ENCODE measurements at regions of chr5 and their contacts with region 1.

Region 1: DNA sequence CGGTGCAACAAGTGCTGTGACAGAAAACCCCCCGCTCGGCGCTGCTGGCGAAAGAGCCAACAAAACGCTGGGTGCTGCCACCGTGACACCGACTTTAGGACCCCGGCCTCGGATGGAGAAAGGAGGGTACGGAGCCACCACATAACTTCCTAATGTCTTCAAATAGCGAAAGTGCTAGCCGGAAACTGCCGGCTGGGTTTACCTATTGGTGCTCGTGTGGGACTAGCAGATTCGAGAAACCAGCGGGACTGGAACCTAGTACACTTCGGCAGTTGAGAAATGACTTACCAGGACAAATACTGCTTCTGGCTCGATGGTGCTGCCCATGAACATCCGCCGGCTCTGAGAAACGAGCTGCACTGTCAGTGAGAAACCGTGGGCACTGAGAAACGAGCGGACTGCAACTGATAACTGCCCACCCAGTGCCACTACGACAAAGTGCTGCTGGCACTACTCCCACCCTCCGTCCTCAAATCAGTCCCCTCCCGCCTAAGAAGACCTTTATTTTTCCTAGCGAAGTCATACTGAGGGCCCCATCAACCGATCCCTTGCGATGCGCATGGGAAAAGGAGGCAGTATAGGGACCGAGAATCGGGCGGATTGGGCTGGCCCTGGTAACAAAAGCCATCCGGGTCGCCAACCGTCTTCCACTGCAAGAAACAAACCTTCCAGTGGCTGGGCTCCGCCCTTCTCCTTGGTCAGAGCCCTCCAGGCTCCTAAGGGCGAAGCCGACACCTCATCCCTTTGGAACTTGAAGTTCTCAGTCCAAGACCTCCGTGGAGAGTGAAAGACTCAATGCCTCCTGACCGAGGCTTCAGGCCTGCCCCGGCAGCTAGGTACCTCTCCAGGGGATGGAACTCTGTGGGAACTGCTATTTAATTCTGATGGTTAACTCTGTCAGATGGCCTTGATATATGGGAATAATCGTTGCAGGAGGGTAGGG is 27.0 kb upstream of the ANXA2R start:
- DNase-seq: peak; percentile 78
- H3K4me3 Mint-ChIP-seq: peak overlapping the region; percentile 99
- H3K27ac Mint-ChIP-seq: peak overlapping the region; percentile 100
- H3K4me1 Mint-ChIP-seq: peaks cover 47% of the 10 kb centered on the region
- H3K27me3 Mint-ChIP-seq: peaks cover 3% of the 10 kb centered on the region

Region 2: GRCh38 chr5:42950440-42951292 is 116.4 kb before region 1 on chr5:
- intact Hi-C with region 1: loop called (anchors 1 kb)
- DNase-seq: peak; percentile 60
- H3K4me3 Mint-ChIP-seq: peak overlapping the region; percentile 88
- H3K27ac Mint-ChIP-seq: peak overlapping the region; percentile 97
- H3K4me1 Mint-ChIP-seq: peaks cover 37% of the 10 kb centered on the region
- H3K27me3 Mint-ChIP-seq: peaks cover 8% of the 10 kb centered on the region

Region 3: DNA sequence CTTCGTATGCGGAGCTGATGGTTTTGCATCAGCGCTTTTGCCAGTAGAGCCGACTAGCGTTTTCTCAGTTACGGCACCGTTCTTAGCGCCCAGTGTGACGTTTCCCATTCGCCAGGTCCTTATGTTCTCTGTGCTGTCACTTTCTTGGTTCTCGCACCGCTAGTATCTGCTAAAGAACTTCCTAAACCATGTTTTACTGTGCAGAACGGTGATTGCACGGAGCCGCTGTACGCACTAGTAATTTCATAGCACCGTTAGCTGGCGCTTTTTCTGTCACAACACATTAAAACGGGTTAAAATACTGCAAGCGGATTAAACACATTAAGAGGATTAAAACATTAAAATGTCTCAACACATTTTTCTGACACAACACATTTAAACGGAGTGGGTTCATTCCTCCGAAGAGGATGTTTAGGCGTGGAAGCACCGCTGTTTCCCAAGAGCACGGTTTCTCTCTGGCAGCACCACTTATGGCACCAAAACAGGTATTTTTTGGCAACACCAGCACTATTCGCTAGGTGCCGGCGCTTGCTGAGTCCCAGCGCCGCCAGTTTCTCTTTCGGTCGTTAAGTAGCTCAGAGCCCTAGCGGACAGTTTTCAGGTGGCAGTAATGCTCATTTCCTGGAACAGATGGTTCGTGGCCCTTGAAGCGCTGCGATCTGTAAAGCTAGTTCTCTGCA is 47.3 kb before region 1 on chr5:
- intact Hi-C with region 1: loop called (anchors 1 kb)
- DNase-seq: peak; percentile 83
- H3K4me3 Mint-ChIP-seq: peak overlapping the region; percentile 90
- H3K27ac Mint-ChIP-seq: peak overlapping the region; percentile 97
- H3K4me1 Mint-ChIP-seq: peaks cover 43% of the 10 kb centered on the region
- H3K27me3 Mint-ChIP-seq: no peaks in the 10 kb centered on the region

Region 4: GRCh38 chr5:43120720-43121564 is 53.9 kb after region 1 on chr5 and contains the start of gene ZNF131:
- intact Hi-C with region 1: loop called (anchors 1 kb)
- DNase-seq: peak; percentile 96
- H3K4me3 Mint-ChIP-seq: peak within 1 kb of the TSS; percentile 95
- H3K27ac Mint-ChIP-seq: peak within 1 kb of the TSS; percentile 98
- H3K4me1 Mint-ChIP-seq: peaks cover 42% of the 10 kb centered on the region
- H3K27me3 Mint-ChIP-seq: peaks cover 2% of the 10 kb centered on the region
- total RNA-seq, gene ZNF131: 38.3 and 40.2 TPM in 2 replicates

Region 5: DNA sequence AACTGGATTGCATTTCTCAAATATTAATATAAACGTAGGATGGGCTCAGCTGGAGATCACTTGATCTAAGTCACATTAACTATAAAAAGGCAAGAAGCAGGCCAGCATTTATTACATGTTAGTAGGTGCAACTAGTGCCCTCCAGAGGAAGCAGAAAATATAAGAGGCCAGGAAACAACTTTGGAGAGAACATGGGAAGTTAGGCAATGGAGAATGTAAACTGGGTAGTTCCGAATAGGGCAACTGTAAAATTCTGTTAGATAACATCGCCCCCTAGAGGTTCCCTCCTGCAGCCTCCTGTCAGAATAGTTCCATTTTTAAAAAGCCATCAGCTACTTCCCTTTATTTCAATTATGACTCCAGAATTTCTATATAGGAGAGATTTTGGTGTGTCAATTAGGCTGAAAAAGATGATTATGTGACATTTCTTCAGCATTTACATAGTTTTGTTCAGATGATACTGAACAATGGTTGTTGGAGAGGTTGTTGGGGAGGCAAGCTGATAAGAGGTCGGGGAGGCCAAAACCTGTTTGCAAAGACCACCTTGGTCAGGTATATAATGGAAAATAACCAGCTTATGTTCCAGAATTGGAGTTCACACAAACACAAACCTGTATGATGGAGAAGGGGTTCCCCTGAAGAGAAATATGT is 322.7 kb after region 1 on chr5:
- intact Hi-C with region 1: loop called (anchors 2 kb)
- DNase-seq: peak; percentile 22
- H3K4me3 Mint-ChIP-seq: no peak overlapping the region
- H3K27ac Mint-ChIP-seq: no peak overlapping the region
- H3K4me1 Mint-ChIP-seq: peaks cover 19% of the 10 kb centered on the region
- H3K27me3 Mint-ChIP-seq: no peaks in the 10 kb centered on the region

Region 6: GRCh38 chr5:43602461-43603343 is 535.6 kb after region 1 on chr5 and contains the start of gene NNT:
- intact Hi-C with region 1: loop called (anchors 2 kb)
- DNase-seq: peak; percentile 76
- H3K4me3 Mint-ChIP-seq: peak within 1 kb of the TSS; percentile 91
- H3K27ac Mint-ChIP-seq: peak within 1 kb of the TSS; percentile 91
- H3K4me1 Mint-ChIP-seq: peaks cover 34% of the 10 kb centered on the region
- H3K27me3 Mint-ChIP-seq: no peaks in the 10 kb centered on the region
- total RNA-seq, gene NNT: 43.6 and 47.5 TPM in 2 replicates

Region 7: DNA sequence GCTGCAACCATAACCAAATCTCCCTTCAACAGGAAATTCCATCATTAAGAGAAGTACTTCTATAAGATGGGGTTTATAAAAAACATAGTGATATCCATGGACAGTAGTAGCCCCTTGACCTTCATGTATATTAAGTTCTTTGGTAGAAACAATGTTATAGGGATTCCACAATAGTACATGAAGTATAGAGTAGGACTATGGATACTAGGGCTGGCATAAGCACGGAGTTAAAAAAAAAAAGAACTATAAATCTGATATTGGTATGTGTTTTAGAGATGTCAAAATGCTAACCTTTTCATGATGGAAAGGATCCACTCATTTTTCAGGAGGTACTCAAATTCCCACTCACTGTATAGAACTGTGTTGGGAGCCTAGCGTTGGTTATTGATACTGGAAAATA is 984.5 kb after region 1 on chr5:
- intact Hi-C with region 1: no loop called
- DNase-seq: no peak
- H3K4me3 Mint-ChIP-seq: no peak overlapping the region
- H3K27ac Mint-ChIP-seq: no peak overlapping the region
- H3K4me1 Mint-ChIP-seq: no peaks in the 10 kb centered on the region
- H3K27me3 Mint-ChIP-seq: no peaks in the 10 kb centered on the region